Endothelial cell of umbilical vein (primary cell): ENCODE measurements at regions of chr15 and their contacts with region 1.

Region 1: GRCh38 chr15:39204031-39204430 is 376.8 kb upstream of the THBS1 start:
- DNase-seq: peak; percentile 48
- H3K4me3 ChIP-seq: no peak overlapping the region
- H3K27ac ChIP-seq: peak overlapping the region; percentile 50
- H3K4me1 ChIP-seq: peaks cover 25% of the 10 kb centered on the region
- H3K27me3 ChIP-seq: no peaks in the 10 kb centered on the region
- CTCF ChIP-seq: no peak
- POLR2A ChIP-seq: no peak

Region 2: DNA sequence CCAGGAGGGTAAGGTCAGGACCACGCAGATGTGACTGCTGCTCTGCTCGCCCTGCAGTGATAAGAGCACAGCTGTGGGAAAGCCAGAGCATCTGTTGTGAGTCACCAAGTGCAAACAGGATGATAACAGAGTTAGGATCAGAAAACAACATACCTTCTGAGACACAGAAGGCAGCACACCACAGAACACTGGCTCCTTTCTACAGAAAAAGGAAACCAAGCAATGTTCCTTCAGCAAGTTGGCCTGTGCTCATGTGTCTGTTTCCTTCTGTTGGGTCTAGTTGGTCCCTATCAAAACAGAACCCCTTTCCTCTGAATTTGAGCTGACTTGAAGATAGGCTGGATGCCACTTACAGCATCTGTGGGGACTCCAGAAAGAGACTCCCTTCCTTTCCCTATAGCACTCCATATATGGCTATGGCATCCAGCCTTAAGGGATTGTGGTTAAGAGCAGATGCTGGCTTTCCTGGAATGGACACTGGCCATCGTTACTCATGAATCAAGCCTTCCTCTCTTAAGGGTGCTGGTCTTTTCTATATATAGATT is 63.9 kb before region 1 on chr15:
- CTCF ChIA-PET with region 1: no interaction called
- POLR2A ChIA-PET with region 1: no interaction called
- dilution Hi-C with region 1: no loop called
- intact Hi-C with region 1: no loop called
- DNase-seq: peak; percentile 100
- H3K4me3 ChIP-seq: no peak overlapping the region
- H3K27ac ChIP-seq: peak overlapping the region; percentile 96
- H3K4me1 ChIP-seq: peaks cover 34% of the 10 kb centered on the region
- H3K27me3 ChIP-seq: no peaks in the 10 kb centered on the region
- CTCF ChIP-seq: no peak
- POLR2A ChIP-seq: peak; percentile 90

Region 3: GRCh38 chr15:39219608-39220007 is 15.6 kb after region 1 on chr15:
- CTCF ChIA-PET with region 1: interaction called, 10 read pairs
- POLR2A ChIA-PET with region 1: no interaction called
- dilution Hi-C with region 1: no loop called
- intact Hi-C with region 1: no loop called
- DNase-seq: no peak
- H3K4me3 ChIP-seq: no peak overlapping the region
- H3K27ac ChIP-seq: no peak overlapping the region
- H3K4me1 ChIP-seq: no peaks in the 10 kb centered on the region
- H3K27me3 ChIP-seq: no peaks in the 10 kb centered on the region
- CTCF ChIP-seq: no peak
- POLR2A ChIP-seq: no peak